Endothelial cell of umbilical vein (primary cell): ENCODE measurements at regions of chr11 and their contacts with region 1.

Region 1: DNA sequence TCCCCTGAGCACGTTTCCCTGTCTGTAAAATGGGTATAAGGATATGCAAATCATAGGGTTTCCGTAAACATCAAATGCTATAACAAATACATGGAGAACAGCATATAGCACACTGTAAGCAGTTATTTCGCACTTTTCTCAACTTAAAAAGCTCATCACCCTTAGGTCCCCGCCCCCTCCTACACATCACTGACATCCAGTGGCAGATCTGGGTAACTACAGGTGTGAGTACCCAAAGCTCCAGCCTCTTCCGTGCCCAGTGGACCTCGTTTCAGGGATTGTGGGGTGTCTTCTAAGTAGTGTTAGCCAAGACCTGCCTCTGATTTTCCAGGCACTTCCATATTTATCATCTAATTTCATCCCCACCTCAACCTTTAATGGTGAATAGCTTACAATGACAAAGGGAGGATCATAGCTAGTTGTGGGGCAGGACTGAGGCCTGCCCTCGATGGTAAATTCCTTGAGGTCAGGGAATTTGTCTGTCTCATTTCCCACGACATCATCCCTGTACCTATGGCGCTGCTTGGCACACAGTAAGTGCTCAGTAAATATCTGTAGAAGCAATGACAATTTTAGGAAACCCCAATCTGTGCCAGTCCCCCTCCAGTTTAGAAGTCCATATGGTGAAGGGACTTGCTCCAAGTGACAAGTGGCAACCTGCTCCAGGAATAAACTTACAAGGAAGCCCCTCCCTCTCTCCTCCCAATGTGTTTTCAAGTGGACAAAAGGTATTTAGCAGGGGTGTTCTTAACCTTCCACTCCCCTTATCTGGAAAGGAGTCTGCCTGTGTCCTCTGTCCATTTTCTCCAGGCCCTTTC is 340.5 kb downstream of the TENM4 start:
- DNase-seq: peak; percentile 68
- H3K4me3 ChIP-seq: no peak overlapping the region
- H3K27ac ChIP-seq: no peak overlapping the region
- H3K4me1 ChIP-seq: peaks cover 8% of the 10 kb centered on the region
- H3K27me3 ChIP-seq: no peaks in the 10 kb centered on the region
- CTCF ChIP-seq: peak; percentile 78
- POLR2A ChIP-seq: no peak

Region 2: DNA sequence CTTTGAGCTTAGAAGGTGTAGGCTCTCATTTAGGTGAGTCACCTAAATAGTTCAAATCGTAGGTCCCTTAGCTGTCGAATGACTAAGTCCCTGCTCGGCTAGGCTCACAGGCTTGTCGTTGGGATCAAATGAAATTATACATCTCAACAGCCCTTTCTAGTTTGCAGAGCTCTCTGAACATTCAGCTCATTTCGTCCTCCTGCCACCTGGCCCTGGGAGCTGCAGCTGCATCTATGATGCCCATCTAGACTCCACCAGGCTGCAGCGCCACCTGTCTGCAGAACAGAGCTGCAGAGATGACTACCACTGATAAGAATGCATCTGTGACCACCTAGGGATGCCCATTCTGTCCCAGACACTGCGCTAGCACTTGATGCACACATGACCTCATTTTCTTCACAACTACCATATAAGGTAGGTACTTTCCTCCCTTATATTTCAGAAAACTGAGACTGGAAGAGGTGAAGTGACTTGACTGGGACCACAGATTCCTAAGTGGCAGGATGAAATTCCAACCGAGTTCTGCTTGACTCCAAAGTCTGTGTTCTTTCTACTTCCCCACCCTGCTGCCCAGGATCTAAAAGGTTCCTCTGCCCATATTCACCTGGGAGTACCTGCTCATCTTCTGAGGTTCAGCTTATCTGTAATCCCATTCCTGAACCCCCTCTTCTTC is 384.5 kb before region 1 on chr11:
- CTCF ChIA-PET with region 1: interaction called, 11 read pairs
- POLR2A ChIA-PET with region 1: no interaction called
- dilution Hi-C with region 1: no loop called
- intact Hi-C with region 1: no loop called
- DNase-seq: peak; percentile 36
- H3K4me3 ChIP-seq: no peak overlapping the region
- H3K27ac ChIP-seq: no peak overlapping the region
- H3K4me1 ChIP-seq: no peaks in the 10 kb centered on the region
- H3K27me3 ChIP-seq: no peaks in the 10 kb centered on the region
- CTCF ChIP-seq: peak; percentile 55 to 66
- POLR2A ChIP-seq: no peak

Region 3: GRCh38 chr11:78902771-78903507 is 197.4 kb before region 1 on chr11:
- CTCF ChIA-PET with region 1: interaction called, 20 read pairs
- POLR2A ChIA-PET with region 1: no interaction called
- dilution Hi-C with region 1: no loop called
- intact Hi-C with region 1: no loop called
- DNase-seq: peak; percentile 4
- H3K4me3 ChIP-seq: no peak overlapping the region
- H3K27ac ChIP-seq: no peak overlapping the region
- H3K4me1 ChIP-seq: no peaks in the 10 kb centered on the region
- H3K27me3 ChIP-seq: no peaks in the 10 kb centered on the region
- CTCF ChIP-seq: peak in 1 of 2 donors; percentile 50
- POLR2A ChIP-seq: no peak

Region 4: DNA sequence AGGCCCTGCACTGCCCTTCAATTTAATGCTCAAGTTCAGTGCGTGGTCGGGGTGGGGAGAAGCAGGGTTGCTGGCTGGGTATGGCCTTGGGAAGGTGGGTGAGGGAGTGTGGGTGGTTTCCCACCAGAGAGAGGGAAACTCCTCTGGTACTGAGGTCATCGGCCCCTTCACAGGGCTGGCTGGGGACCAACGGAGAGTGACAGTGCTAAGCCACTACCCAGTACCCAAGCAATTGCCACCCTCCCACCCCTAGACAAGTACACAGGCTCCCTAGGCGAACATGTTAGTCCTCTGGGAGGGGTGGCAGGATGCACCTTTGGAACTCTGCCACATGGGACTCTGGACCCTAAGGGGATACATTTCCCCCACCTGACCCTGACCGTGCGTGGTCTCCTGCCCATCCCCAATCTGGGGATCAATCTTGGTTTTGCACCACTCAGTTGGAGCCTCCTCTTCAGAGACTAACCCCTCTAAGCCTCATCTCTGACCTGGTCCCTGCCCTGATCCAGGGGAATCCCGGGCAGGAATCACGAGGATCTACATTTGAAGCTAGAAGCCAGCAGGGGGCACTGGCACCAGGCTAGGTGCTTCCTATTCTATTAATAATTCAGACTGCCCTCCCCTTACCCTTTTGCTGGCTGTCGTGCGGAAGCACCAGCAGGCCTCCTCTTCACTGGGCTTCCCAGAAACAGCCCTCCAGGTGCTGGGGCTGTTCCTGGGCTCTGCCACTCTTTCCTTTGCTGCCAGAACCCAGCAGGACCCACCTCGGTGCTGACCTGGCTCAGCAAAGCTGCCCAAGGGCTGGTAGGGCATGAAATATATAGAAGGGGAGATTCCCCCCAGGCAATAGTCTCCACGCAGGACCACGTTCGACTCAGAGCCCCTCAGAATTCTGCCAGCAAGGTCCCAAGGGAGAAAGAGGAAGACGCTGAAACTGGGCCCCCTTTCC is 37.2 kb before region 1 on chr11:
- CTCF ChIA-PET with region 1: interaction called, 115 read pairs
- POLR2A ChIA-PET with region 1: no interaction called
- dilution Hi-C with region 1: no loop called
- intact Hi-C with region 1: loop called (anchors 1 kb)
- DNase-seq: peak; percentile 46
- H3K4me3 ChIP-seq: no peak overlapping the region
- H3K27ac ChIP-seq: no peak overlapping the region
- H3K4me1 ChIP-seq: no peaks in the 10 kb centered on the region
- H3K27me3 ChIP-seq: peaks cover 0 to 6% of the 10 kb centered on the region in 2 experiments
- CTCF ChIP-seq: peak; percentile 53 to 63
- POLR2A ChIP-seq: no peak

Region 5: DNA sequence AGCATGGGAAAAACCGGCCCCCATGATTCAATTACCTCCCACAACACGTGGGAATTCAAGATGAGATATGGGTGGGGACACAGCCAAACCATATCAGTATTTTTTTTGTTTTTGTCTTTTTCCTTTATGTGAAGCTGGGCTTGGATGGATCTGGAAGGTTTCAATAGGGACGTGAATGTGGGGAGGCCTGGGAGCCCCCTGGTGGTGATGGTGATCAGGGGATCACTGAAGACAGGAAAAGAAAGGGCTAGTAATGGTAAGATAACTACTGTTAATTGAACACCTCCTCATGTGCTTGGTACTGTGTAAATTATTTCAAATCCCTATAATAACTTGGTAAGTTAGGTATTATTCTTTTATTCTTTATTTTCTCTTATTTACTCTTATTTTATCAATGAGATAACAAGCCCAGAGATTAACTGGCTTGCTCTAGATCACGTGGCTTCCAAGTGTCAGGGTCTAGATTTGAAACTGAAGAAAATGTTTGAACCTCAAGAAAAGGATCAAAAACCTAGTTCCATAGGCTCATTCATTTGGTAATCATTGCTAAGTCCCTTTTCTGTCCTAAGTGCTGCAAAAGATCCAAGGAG is 23.7 kb before region 1 on chr11:
- CTCF ChIA-PET with region 1: interaction called, 85 read pairs
- POLR2A ChIA-PET with region 1: no interaction called
- dilution Hi-C with region 1: no loop called
- intact Hi-C with region 1: loop called (anchors 2 kb)
- DNase-seq: peak; percentile 50
- H3K4me3 ChIP-seq: no peak overlapping the region
- H3K27ac ChIP-seq: no peak overlapping the region
- H3K4me1 ChIP-seq: no peaks in the 10 kb centered on the region
- H3K27me3 ChIP-seq: no peaks in the 10 kb centered on the region
- CTCF ChIP-seq: peak; percentile 63 to 69
- POLR2A ChIP-seq: no peak

Region 6: DNA sequence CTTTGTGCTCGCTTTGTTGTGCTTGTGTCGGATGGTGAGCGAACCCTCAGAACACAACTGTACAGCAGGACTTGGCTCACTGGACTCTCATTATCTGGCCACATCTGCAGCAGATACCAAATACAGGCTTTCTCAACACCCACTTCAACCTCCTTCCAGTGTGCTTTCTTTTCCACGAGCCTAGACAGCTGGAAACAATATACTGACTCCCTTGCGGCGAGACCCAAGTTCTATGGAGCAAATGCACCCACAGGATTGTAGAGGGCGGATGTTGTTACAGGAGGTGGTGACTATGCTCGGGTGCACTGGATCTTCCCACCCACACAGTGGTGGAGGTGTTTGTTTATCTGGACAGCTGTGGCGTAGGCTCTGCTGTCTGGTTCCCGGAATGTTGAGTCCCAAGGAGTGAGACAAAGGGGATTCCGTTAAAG is 136.3 kb after region 1 on chr11:
- CTCF ChIA-PET with region 1: no interaction called
- POLR2A ChIA-PET with region 1: no interaction called
- dilution Hi-C with region 1: no loop called
- intact Hi-C with region 1: no loop called
- DNase-seq: no peak
- H3K4me3 ChIP-seq: no peak overlapping the region
- H3K27ac ChIP-seq: no peak overlapping the region
- H3K4me1 ChIP-seq: no peaks in the 10 kb centered on the region
- H3K27me3 ChIP-seq: no peaks in the 10 kb centered on the region
- CTCF ChIP-seq: no peak
- POLR2A ChIP-seq: no peak